GM12878 (cell line): ENCODE measurements at regions of chr12 and their contacts with region 1.

Region 1: GRCh38 chr12:4320853-4321701 is at the start of gene TIGAR:
- DNase-seq: peak; percentile 70
- ATAC-seq: peak; percentile 96
- H3K4me3 ChIP-seq: peak within 1 kb of the TSS; percentile 88
- H3K27ac ChIP-seq: peak within 1 kb of the TSS; percentile 90
- H3K4me1 ChIP-seq: peaks cover 3% of the 10 kb centered on the region; the same call in 1 of the 2 replicates
- H3K27me3 ChIP-seq: no peaks in the 10 kb centered on the region
- CTCF ChIP-seq: no peak
- EP300 ChIP-seq: no peak
- POLR2A ChIP-seq: peak; percentile 100
- RAD21 ChIP-seq: no peak
- polyA plus RNA-seq, gene TIGAR: 32.9 to 45.7 TPM

Region 2: DNA sequence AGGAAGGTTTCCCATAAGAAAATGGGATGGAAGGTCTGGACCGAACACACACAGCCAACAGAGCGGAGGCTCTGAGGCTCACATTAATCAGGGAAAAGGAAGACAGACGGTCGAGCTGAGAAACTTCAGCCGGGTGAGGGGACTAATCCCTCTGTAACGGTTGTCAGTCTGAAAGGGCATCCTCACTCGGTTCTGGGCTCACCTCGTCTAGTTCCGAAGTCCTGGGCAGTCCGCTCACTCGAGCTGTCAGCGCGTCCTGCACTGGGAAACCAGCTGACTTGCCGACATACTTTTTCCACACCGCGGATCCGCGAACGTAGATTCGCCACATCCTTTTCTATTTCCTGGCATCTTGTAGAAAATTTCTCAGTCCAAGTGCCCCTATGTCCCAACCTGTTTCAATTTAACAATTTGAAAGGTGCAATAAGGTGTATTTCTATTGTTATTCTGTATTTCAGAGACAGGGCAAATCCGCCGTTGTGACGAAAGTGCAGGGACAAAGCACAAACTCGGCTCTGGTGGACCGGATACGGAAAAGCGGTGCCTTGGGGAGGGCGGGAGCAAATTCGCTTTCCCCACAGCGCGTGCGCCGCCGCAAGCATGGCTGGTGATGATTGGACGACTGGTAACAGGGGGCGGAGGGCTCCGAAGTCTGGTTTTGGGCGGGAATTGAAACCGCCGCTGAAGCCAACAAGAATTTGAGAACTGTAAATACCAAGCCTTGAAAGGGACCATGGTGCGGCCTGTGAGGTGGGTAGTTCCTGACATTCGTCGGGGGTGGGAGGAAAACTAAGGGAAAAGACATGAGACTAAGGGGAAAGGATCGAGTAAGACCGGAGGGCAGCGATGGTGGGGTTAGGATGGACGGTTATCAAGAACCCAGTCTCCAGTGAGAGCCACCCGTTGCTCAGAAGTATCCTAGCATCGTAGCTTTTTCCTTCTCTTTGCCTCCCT is 217.4 kb after region 1 on chr12 and contains the start of gene RAD51AP1:
- CTCF ChIA-PET with region 1: no interaction called
- POLR2A ChIA-PET with region 1: interaction called, 3 read pairs
- RAD21 ChIA-PET with region 1: no interaction called
- SMC1A ChIA-PET with region 1: no interaction called
- in situ Hi-C with region 1: no loop called
- intact Hi-C with region 1: loop called (anchors 5 kb)
- DNase-seq: peak; percentile 92
- ATAC-seq: peak; percentile 97
- H3K4me3 ChIP-seq: peak within 1 kb of the TSS; percentile 90
- H3K27ac ChIP-seq: peak within 1 kb of the TSS; percentile 99
- H3K4me1 ChIP-seq: peaks cover 15% of the 10 kb centered on the region
- H3K27me3 ChIP-seq: no peaks in the 10 kb centered on the region
- CTCF ChIP-seq: no peak
- EP300 ChIP-seq: peak in 1 of 2 experiments; percentile 100; a peak in 2 of 4 replicates
- POLR2A ChIP-seq: peak; percentile 80
- RAD21 ChIP-seq: no peak
- polyA plus RNA-seq, gene RAD51AP1: 71.4 to 86.0 TPM